Right ventricle myocardium superior (tissue), 1 donor: ENCODE measurements at regions of chr12 and their contacts with region 1.

Region 1: GRCh38 chr12:4763549-4763948 is 43.3 kb downstream of the GALNT8 start:
- DNase-seq: no peak
- ATAC-seq: no peak

Region 2: GRCh38 chr12:4604684-4605193 is 158.8 kb before region 1 on chr12:
- intact Hi-C with region 1: loop called (anchors 10 kb)
- DNase-seq: peak; percentile 78
- ATAC-seq: peak; percentile 97

Region 3: DNA sequence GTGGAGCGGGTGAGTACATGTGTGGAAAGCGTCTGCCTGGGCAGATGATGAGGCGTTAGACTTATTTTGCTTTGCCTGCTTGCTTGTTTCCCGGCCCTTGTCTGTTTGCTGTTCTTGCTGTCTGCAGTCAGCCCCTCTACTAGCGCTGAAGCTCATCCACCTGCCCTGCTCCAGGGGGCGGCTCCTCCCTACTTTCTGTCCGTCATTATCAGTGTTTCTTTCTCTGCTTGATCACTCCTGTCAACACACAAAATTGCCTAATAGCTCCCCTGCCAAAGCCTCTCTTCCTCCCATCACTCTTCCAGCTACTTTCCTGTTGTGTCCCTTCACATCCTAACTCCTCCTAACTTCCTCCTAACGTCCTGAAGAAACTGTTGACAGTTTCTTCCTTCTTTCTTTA is 78.2 kb before region 1 on chr12:
- intact Hi-C with region 1: loop called (anchors 10 kb)
- DNase-seq: no peak
- ATAC-seq: peak; percentile 86